MCF 10A (cell line): ENCODE measurements at regions of chr14 and their contacts with region 1.

Region 1: DNA sequence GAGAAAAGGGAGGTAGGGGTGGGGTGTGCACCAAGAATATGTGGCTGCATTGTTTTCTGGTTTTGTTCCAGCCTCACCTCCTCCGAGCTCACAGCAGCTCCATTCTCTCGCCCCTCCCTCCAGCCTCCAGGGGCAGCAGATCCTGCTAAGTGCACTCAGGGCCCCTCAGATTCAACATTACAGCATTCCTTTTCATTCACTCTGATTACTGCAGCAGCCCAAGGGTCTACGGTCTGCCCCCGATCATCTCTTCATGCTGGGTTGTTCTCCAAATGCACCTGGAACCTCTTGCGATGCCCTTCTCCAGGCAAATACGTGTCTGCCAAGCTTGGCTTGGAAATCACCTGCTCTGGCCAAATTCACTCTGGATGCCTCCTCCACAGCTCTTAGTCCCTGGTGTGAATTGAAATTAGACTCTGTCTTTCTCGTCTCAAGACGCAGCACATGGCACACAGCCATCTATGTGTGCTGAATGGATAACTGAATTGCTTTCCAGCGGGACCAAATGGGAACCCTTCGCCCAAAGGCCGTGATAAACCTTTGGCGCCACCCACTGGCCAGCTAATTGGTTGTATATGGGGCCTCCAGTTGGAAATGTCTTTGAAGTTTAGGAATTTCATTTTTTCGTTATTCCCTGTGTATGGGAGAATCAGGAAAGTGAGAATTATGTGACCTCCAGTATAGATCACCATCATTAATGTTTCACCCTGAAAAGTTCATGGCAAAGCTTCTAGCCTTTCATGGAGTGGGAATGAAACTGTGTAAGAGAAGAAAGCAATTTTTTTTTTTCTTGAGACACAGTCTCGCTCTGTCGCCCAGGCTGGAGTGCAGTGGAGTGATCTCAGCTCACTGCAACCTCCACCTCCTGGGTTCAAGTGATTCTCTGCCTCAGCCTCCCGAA is 9.6 kb upstream of the HSP90AA1 start:
- DNase-seq: peak; percentile 89
- H3K4me3 Mint-ChIP-seq: no peak overlapping the region
- H3K27ac Mint-ChIP-seq: no peak overlapping the region
- H3K4me1 Mint-ChIP-seq: peaks cover 18% of the 10 kb centered on the region
- H3K27me3 Mint-ChIP-seq: no peaks in the 10 kb centered on the region
- CTCF ChIP-seq: peak; percentile 87

Region 2: GRCh38 chr14:101707068-101707842 is 389.2 kb before region 1 on chr14:
- CTCF ChIA-PET with region 1: no interaction called
- POLR2A ChIA-PET with region 1: no interaction called
- intact Hi-C with region 1: loop called (anchors 1 kb)
- DNase-seq: peak; percentile 88
- H3K4me3 Mint-ChIP-seq: no peak overlapping the region
- H3K27ac Mint-ChIP-seq: no peak overlapping the region
- H3K4me1 Mint-ChIP-seq: peaks cover 6% of the 10 kb centered on the region
- H3K27me3 Mint-ChIP-seq: peaks cover 25% of the 10 kb centered on the region
- CTCF ChIP-seq: peak; percentile 86

Region 3: GRCh38 chr14:101774006-101774795 is 322.3 kb before region 1 on chr14:
- CTCF ChIA-PET with region 1: interaction called, 6 read pairs
- POLR2A ChIA-PET with region 1: no interaction called
- intact Hi-C with region 1: loop called (anchors 2 kb)
- DNase-seq: no peak
- H3K4me3 Mint-ChIP-seq: no peak overlapping the region
- H3K27ac Mint-ChIP-seq: no peak overlapping the region
- H3K4me1 Mint-ChIP-seq: peaks cover 14% of the 10 kb centered on the region
- H3K27me3 Mint-ChIP-seq: no peaks in the 10 kb centered on the region
- CTCF ChIP-seq: no peak

Region 4: DNA sequence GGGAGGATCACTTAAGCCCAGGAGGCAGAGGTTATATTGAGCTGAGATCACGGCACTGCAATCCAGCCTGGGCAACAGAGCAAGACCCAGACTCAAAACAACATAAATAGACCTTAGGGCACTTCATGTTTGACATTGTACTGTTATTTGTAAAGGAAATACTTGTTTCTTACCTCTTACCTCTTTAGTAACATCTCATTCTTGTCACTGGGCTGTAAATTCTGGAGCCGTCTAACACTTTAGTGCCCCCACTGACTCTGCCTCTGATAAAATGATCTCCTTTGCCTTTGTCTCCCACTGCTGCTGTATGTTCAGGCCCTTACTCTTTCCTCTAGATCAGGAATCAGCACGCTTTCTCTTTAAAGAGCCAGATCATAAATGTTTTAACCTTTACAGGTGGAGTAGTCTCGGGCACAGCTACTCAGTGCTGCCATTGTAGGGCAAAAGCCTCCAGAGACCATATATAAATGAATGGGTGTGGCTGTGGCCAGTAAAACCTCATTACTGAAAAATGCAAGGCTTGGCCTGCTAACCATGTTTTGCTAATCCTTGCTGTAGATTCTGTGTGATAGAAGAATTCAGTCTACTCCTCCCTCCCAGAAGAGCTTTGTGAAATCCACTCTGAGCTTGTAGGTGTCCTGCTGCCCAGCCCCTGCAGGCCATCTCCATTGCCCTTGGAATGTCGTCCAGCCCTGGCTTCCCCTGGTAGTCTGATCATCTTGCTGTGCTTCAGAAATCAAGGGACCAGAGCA is 67.9 kb before region 1 on chr14:
- CTCF ChIA-PET with region 1: interaction called, 3 read pairs
- POLR2A ChIA-PET with region 1: no interaction called
- intact Hi-C with region 1: loop called (anchors 2 kb)
- DNase-seq: peak; percentile 20
- H3K4me3 Mint-ChIP-seq: peak overlapping the region; percentile 42
- H3K27ac Mint-ChIP-seq: peak overlapping the region; percentile 90
- H3K4me1 Mint-ChIP-seq: peaks cover 29% of the 10 kb centered on the region
- H3K27me3 Mint-ChIP-seq: no peaks in the 10 kb centered on the region
- CTCF ChIP-seq: no peak

Region 5: GRCh38 chr14:102046343-102047278 is 49.9 kb before region 1 on chr14:
- CTCF ChIA-PET with region 1: interaction called, 10 read pairs
- POLR2A ChIA-PET with region 1: no interaction called
- intact Hi-C with region 1: no loop called
- DNase-seq: peak; percentile 35
- H3K4me3 Mint-ChIP-seq: no peak overlapping the region
- H3K27ac Mint-ChIP-seq: no peak overlapping the region
- H3K4me1 Mint-ChIP-seq: no peaks in the 10 kb centered on the region
- H3K27me3 Mint-ChIP-seq: no peaks in the 10 kb centered on the region
- CTCF ChIP-seq: no peak

Region 6: DNA sequence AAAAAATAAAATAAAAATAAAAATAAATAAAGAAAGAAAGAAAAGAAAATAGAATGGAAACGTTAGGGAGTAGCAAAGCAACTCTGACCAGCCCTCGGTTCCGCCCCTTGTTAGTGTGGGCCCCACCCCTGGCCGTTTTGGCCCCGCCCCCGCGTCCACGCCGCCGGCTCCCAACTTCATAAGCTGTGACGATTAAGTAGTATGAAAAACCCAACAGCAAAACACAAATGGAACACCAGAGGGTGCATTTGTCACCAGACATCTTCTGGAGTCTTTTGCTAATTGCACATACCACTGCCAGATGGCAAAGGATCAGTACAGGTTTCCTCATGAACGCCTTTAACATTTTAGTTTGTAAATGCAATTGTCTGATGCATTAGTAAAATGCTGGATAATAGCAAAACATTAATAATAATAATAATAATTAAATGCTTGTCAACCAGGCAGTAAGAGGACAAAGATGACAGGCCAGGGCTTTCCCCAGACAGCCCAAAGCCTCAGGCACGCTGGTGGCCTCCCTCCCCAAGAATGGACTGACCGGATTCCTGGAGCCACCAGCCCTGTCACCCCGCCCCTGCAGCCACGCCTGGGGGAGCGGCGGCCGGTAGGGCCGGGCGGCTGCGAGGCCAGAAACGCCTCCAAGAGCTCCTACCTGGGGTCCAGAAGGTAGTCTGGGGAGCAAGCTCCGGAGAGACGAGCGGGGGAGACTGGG is 33.2 kb before region 1 on chr14:
- CTCF ChIA-PET with region 1: interaction called, 45 read pairs
- POLR2A ChIA-PET with region 1: interaction called, 3 read pairs
- intact Hi-C with region 1: loop called (anchors 1 kb)
- DNase-seq: peak; percentile 88
- H3K4me3 Mint-ChIP-seq: no peak overlapping the region
- H3K27ac Mint-ChIP-seq: no peak overlapping the region
- H3K4me1 Mint-ChIP-seq: no peaks in the 10 kb centered on the region
- H3K27me3 Mint-ChIP-seq: no peaks in the 10 kb centered on the region
- CTCF ChIP-seq: peak; percentile 29

Region 7: GRCh38 chr14:102111101-102111500 is 14.6 kb after region 1 on chr14:
- CTCF ChIA-PET with region 1: interaction called, 18 read pairs
- POLR2A ChIA-PET with region 1: no interaction called
- intact Hi-C with region 1: no loop called
- DNase-seq: no peak
- H3K4me3 Mint-ChIP-seq: no peak overlapping the region
- H3K27ac Mint-ChIP-seq: no peak overlapping the region
- H3K4me1 Mint-ChIP-seq: no peaks in the 10 kb centered on the region
- H3K27me3 Mint-ChIP-seq: no peaks in the 10 kb centered on the region
- CTCF ChIP-seq: no peak

Region 8: GRCh38 chr14:102387086-102387485 is 290.6 kb after region 1 on chr14:
- CTCF ChIA-PET with region 1: no interaction called
- POLR2A ChIA-PET with region 1: no interaction called
- intact Hi-C with region 1: no loop called
- DNase-seq: no peak
- H3K4me3 Mint-ChIP-seq: no peak overlapping the region
- H3K27ac Mint-ChIP-seq: no peak overlapping the region
- H3K4me1 Mint-ChIP-seq: no peaks in the 10 kb centered on the region
- H3K27me3 Mint-ChIP-seq: no peaks in the 10 kb centered on the region
- CTCF ChIP-seq: no peak

Region 9: GRCh38 chr14:102717276-102717675 is 620.8 kb after region 1 on chr14:
- CTCF ChIA-PET with region 1: no interaction called
- POLR2A ChIA-PET with region 1: no interaction called
- intact Hi-C with region 1: no loop called
- DNase-seq: no peak
- H3K4me3 Mint-ChIP-seq: no peak overlapping the region
- H3K27ac Mint-ChIP-seq: no peak overlapping the region
- H3K4me1 Mint-ChIP-seq: no peaks in the 10 kb centered on the region
- H3K27me3 Mint-ChIP-seq: no peaks in the 10 kb centered on the region
- CTCF ChIP-seq: no peak